Activated CD8-positive, alpha-beta memory T cell treated with anti-CD3 and anti-CD28 coated beads, Interleukin-2, amount 10 ng/mL, durations not matched to agents 7 days and 5 days (primary cell): ENCODE measurements at regions of chr2 and their contacts with region 1.

Region 1: GRCh38 chr2:9695941-9696340 is 65.1 kb upstream of the YWHAQ start:
- DNase-seq: no peak
- ATAC-seq: no peak
- H3K4me3 Mint-ChIP-seq: no peak overlapping the region
- H3K27ac Mint-ChIP-seq: no peak overlapping the region
- H3K4me1 Mint-ChIP-seq: peaks cover 42% of the 10 kb centered on the region
- H3K27me3 Mint-ChIP-seq: no peaks in the 10 kb centered on the region

Region 2: DNA sequence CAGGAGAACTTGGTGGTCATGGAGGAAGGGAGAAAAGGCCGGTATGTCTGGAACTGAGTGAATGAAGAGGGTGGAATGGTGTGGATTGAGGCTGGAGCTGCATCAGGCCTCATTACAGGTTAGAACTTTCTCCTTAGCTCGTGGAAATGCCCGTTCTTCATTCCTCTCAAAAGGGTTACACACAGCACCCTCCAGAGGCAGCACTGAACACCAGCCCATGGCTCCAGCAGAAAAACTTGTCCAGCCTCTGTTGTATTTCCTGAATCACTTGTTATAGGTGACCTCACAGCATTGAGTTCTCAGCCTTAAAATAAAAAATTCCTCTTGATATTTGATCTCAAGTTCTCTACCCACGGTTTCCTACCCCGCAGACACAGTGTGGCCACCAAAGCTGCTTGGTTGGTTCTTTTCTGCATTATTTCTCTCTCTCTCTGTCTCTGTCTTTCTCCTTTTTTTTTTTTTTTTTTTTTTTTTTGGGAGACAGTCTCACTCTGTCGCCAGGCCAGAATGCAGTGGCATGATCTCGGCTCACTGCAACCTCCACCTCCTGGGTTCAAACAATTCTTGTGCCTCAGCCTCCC is 362.3 kb before region 1 on chr2:
- CTCF ChIA-PET with region 1: no interaction called
- DNase-seq: no peak
- ATAC-seq: no peak
- H3K4me3 Mint-ChIP-seq: no peak overlapping the region
- H3K27ac Mint-ChIP-seq: no peak overlapping the region
- H3K4me1 Mint-ChIP-seq: peaks cover 6% of the 10 kb centered on the region
- H3K27me3 Mint-ChIP-seq: peaks cover 30% of the 10 kb centered on the region

Region 3: GRCh38 chr2:9613291-9613690 is 82.7 kb before region 1 on chr2:
- CTCF ChIA-PET with region 1: no interaction called
- DNase-seq: no peak
- ATAC-seq: no peak
- H3K4me3 Mint-ChIP-seq: no peak overlapping the region
- H3K27ac Mint-ChIP-seq: no peak overlapping the region
- H3K4me1 Mint-ChIP-seq: peaks cover 86% of the 10 kb centered on the region
- H3K27me3 Mint-ChIP-seq: no peaks in the 10 kb centered on the region

Region 4: DNA sequence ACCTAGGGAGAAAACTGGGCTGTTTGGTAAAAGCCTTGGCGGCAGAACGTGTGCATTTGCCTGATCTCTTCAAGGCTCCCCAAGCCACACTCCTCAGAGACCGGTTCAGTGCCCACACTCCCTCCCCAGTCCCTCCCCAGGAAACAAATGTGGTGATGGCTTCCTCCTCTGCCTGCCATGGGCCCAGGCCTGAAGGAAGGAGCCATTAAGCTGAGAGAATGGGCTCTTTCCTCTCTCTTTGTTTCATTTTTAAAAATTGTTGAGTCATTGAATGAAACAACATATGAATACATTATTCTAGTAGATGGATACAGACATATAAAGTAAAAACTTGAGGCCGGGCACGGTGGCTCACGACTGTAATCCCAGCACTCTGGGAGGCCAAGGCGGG is 14.5 kb before region 1 on chr2:
- CTCF ChIA-PET with region 1: interaction called, 13 read pairs
- DNase-seq: peak; percentile 81
- ATAC-seq: peak; percentile 97
- H3K4me3 Mint-ChIP-seq: peak overlapping the region; percentile 15
- H3K27ac Mint-ChIP-seq: peak overlapping the region; percentile 88
- H3K4me1 Mint-ChIP-seq: peaks cover 20% of the 10 kb centered on the region
- H3K27me3 Mint-ChIP-seq: peaks cover 5% of the 10 kb centered on the region

Region 5: GRCh38 chr2:9778012-9778411 is 82.1 kb after region 1 on chr2:
- CTCF ChIA-PET with region 1: no interaction called
- DNase-seq: no peak
- ATAC-seq: no peak
- H3K4me3 Mint-ChIP-seq: no peak overlapping the region
- H3K27ac Mint-ChIP-seq: no peak overlapping the region
- H3K4me1 Mint-ChIP-seq: peaks cover 52% of the 10 kb centered on the region
- H3K27me3 Mint-ChIP-seq: no peaks in the 10 kb centered on the region